ENCODE measurements at regions of chr20 and their contacts with region 1.

Region 1: DNA sequence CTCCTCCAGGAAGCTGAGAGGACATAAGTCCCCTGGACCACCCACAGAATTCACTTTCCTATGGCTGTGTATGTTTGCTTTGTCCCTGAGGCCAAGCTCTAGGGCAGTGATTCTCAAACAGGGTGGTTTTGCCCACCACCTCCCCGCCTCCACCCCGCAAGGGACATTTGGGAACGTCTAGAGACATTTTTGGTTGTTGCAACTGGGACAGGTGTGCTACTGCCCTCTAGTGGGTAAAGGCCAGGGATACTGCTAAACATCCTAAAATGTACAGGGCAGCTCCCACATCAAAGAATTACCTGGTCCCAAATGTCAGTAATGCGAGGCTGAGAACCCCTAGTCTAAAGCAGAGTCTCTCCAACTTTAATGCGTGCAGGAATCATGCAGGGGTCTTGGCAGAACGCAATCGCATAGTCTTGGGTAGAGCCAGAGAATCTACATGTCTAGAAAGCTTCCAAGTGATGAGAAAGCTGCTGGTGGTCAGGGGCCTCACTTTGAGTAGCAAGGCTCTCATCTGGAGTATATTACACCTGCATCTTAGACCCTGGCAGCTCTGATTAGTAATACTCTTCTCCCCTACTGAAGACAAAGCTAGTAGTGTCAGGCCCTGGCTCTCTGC is 5.1 kb downstream of the KCNS1 start:
- DNase-seq: peak; percentile 62
- H3K4me3 Mint-ChIP-seq: no peak overlapping the region
- H3K27ac Mint-ChIP-seq: no peak overlapping the region
- H3K4me1 Mint-ChIP-seq: peaks cover 9% of the 10 kb centered on the region
- H3K27me3 Mint-ChIP-seq: peaks cover 35% of the 10 kb centered on the region

Region 2: GRCh38 chr20:45011108-45011526 is 84.7 kb before region 1 on chr20:
- CTCF ChIA-PET with region 1: interaction called, 26 read pairs
- POLR2A ChIA-PET with region 1: no interaction called
- DNase-seq: peak; percentile 41
- H3K4me3 Mint-ChIP-seq: no peak overlapping the region
- H3K27ac Mint-ChIP-seq: no peak overlapping the region
- H3K4me1 Mint-ChIP-seq: peaks cover 46% of the 10 kb centered on the region
- H3K27me3 Mint-ChIP-seq: no peaks in the 10 kb centered on the region

Region 3: GRCh38 chr20:45044084-45044573 is 51.7 kb before region 1 on chr20:
- CTCF ChIA-PET with region 1: interaction called, 75 read pairs
- POLR2A ChIA-PET with region 1: interaction called, 7 read pairs
- DNase-seq: peak; percentile 43
- H3K4me3 Mint-ChIP-seq: no peak overlapping the region
- H3K27ac Mint-ChIP-seq: peak overlapping the region; percentile 55
- H3K4me1 Mint-ChIP-seq: peaks cover 54% of the 10 kb centered on the region
- H3K27me3 Mint-ChIP-seq: no peaks in the 10 kb centered on the region

Region 4: DNA sequence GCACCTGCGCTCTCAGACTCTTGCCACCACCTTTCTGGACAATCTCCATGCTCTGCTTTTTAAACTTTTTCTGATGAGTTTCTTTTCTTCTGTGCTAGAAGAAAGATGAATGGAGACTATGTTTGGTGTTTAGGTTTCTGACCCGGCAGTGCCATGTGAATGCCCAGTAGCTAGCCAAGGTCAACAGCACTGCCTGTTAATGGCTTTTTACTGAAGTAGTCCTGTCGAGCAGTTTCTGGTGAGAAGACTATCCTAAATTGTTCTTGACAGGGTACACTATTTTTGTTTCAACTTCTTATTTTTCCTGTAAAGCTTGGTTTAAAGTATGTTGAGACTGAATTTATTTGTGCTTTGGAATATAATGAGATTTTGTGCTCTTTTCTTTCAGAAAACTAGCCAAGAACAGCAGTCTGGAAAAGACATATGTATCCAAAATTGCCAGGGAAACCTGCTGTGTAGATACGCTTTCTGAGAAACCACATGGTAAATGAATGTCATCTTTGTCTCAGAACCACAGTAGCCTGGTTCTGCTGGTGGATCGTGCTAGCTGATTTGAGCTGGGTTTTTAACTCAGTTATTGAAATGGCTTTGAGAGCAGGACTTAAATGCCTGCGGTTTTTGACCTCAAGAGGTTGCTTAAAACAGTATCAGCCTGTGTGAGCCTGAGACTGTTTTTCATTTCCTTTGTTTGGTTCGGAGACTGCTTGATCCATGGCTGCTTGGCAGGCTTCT is 43.0 kb before region 1 on chr20:
- CTCF ChIA-PET with region 1: interaction called, 28 read pairs
- POLR2A ChIA-PET with region 1: interaction called, 5 read pairs
- DNase-seq: peak; percentile 47
- H3K4me3 Mint-ChIP-seq: no peak overlapping the region
- H3K27ac Mint-ChIP-seq: peak overlapping the region; percentile 68
- H3K4me1 Mint-ChIP-seq: peaks cover 66% of the 10 kb centered on the region
- H3K27me3 Mint-ChIP-seq: no peaks in the 10 kb centered on the region

Region 5: GRCh38 chr20:45080867-45081624 is 14.8 kb before region 1 on chr20:
- CTCF ChIA-PET with region 1: interaction called, 13 read pairs
- POLR2A ChIA-PET with region 1: no interaction called
- DNase-seq: no peak
- H3K4me3 Mint-ChIP-seq: no peak overlapping the region
- H3K27ac Mint-ChIP-seq: no peak overlapping the region
- H3K4me1 Mint-ChIP-seq: no peaks in the 10 kb centered on the region
- H3K27me3 Mint-ChIP-seq: no peaks in the 10 kb centered on the region

Region 6: DNA sequence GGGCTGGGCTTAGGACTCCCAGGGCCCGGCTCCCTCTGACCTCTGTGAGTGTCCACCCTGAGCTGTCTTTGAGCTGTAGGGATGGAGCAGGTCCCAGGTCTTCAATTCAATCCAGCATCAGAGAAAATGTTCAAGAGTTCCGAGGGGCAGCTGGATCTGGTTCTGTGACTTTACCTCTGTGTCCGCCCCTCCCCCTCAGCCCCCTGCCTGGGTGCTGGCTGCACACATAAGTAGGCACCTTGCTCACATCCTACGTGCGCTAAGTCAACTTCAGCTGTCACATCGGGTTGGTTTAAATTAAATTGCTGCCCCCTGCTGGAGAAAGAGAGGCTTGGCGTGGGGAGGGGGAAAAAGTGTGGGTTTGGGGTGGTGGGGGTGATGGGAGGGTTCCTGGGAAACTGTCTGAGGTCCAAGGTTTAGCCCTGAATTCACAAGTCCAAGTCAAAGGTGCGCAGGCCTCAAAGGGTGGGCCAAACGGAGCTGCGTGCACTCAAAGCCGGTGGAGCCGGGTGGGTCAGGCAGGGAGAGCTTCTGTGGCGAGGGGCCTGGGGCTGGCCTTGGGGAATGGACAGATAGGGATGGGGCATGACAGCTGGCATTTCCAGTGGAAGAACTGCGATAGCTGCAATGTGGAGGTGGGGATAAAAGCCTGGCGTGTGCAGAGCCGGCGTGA is 16.1 kb after region 1 on chr20:
- CTCF ChIA-PET with region 1: interaction called, 44 read pairs
- POLR2A ChIA-PET with region 1: interaction called, 4 read pairs
- DNase-seq: no peak
- H3K4me3 Mint-ChIP-seq: no peak overlapping the region
- H3K27ac Mint-ChIP-seq: no peak overlapping the region
- H3K4me1 Mint-ChIP-seq: peaks cover 4% of the 10 kb centered on the region
- H3K27me3 Mint-ChIP-seq: peaks cover 9% of the 10 kb centered on the region

Measured in activated CD4-positive, alpha-beta memory T cell treated with anti-CD3 and anti-CD28 coated beads, Interleukin-2, amount 10 ng/mL, durations not matched to agents 7 days and 5 days (primary cell).